ENCODE measurements at regions of chr2 and their contacts with region 1.

Region 1: DNA sequence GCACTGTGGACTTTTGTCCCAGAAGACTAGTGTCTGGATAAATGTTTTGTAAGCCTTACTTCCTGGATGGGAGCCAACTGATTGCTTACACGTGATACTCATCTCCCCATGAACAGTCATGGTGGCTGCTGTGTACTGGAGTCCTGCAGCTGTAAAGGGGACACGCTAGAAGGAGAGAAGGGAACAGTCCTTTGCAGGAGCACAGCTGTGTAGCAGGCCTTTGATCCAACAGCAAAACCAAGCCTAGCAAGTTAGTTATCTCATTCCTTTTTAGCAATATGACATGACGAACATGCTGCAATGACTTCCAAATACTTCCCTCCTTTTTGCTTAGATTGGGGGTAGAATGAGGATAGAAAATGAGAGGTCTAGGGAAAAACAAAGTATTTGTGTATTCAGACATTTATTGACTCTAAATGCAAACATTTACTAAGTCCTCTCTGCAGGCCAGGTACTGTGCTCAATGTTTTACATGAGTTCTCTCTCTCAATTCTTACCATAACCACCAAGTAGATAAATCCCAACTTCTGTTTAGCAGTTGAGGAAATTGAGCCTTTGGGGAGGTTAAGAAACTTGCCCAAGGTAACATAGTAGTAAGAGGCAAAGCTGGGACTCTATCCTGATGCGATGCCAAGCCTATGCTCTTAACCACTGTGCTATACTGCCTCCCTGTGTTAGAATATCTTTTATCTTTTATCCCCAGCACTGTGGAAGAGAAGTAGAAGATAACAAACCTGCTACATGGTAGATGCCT is 55.4 kb upstream of the CD28 start:
- DNase-seq: no peak
- ATAC-seq: peak; percentile 74
- H3K4me3 ChIP-seq: no peak overlapping the region
- H3K27ac ChIP-seq: peak overlapping the region in 1 of 2 donors; percentile 52
- H3K4me1 ChIP-seq: peaks cover 0 to 3% of the 10 kb centered on the region in 2 donors
- H3K27me3 ChIP-seq: no peaks in the 10 kb centered on the region

Region 2: DNA sequence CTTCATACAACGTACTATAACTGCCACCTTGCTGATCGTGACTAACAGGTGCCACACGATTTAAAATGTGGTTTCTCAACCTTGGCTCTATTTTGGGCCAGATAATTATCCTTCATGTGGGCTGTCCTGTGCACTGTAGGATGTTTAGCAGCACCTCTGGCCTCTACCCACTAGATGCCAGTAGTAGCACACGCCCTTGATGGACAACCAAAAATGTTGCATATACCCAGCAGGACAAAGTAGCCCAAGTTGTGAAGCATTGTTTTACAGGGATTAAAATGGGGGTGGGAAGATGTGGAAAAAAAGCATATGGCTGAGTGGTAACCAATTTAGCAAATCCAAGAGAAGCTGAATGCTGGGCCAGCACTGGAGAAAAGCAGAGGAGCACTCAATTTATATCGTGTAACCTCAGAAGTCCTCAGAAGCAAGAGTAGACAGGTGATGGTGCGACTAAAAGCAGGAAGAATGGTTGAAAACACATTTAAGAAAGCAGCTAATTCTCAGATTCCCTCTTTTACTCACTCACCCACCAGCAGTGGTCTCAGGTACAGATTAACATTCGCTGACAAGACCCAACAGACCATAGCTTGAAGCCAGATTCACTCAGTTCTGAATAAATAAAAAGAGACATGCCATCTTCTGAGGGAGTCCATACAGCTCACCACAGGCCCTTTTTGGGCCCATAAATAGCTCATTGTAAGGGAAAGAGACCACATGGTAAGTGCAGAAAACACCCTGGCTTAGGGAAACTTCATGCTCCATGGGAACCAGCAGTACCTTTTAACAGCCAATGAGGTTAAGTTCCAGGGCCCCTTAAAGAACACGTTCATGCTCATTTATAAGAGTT is 166.5 kb before region 1 on chr2:
- intact Hi-C with region 1: loop called (anchors 1 to 5 kb)
- DNase-seq: no peak
- ATAC-seq: peak; percentile 73
- H3K4me3 ChIP-seq: no peak overlapping the region
- H3K27ac ChIP-seq: no peak overlapping the region
- H3K4me1 ChIP-seq: peaks cover 0 to 2% of the 10 kb centered on the region in 2 donors
- H3K27me3 ChIP-seq: no peaks in the 10 kb centered on the region

Region 3: DNA sequence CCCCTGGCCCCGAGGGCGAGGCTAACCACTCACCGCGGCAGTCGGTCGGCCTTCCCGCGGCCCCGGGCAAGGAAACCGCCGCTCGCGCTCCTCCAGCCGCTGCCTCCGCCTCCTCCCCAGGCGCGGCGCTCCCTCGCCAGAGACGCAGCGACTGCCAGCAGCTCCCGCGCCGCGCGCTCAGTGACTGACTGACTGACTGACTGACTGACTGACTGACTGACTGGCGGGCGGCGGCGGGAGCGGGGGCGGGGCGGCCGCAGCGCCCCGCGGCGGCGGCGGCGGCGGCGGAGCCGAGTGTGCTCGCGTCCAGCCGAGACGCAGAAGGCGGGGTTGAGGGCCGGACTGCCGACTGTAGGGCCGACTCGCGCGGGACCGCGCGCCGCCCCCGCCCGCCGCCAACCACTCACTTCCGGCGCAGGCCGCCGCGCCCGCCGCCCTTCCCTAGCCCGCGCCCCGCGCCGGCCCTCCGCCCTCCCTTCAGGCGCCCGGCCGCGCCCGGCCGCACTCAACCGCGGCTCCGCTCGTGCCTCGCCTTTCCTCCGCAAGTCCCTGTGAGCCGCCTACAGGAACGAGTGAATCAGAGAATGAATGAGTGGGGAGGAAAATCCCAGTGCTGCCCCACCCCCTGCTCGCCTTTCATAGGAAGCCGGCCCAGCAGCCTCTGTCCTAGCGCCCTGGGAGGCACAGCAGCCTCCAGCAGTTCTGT is 115.8 kb before region 1 on chr2 and contains the start of gene RAPH1:
- intact Hi-C with region 1: loop called in 1 of 2 experiments (anchors 2 kb)
- DNase-seq: peak; percentile 93 to 96
- ATAC-seq: peak; percentile 90
- H3K4me3 ChIP-seq: peak within 1 kb of the TSS; percentile 91 to 98
- H3K27ac ChIP-seq: peak within 1 kb of the TSS; percentile 30 to 91
- H3K4me1 ChIP-seq: peaks cover 0 to 5% of the 10 kb centered on the region in 2 donors
- H3K27me3 ChIP-seq: no peaks in the 10 kb centered on the region
- total RNA-seq, gene RAPH1: 62.0 to 74.2 TPM